CD4-positive, alpha-beta T cell (primary cell): ENCODE measurements at regions of chr6 and their contacts with region 1.

Region 1: GRCh38 chr6:63764318-63764916 is 128.8 kb downstream of the PHF3 start:
- DNase-seq: peak in 3 of 14 experiments; percentile 65 to 76 (median 70)
- ATAC-seq: no peak
- H3K4me3 ChIP-seq: no peak overlapping the region
- H3K4me3 Mint-ChIP-seq: no peak overlapping the region
- H3K27ac ChIP-seq: no peak overlapping the region
- H3K27ac Mint-ChIP-seq: no peak overlapping the region
- H3K4me1 ChIP-seq: no peaks in the 10 kb centered on the region
- H3K4me1 Mint-ChIP-seq: no peaks in the 10 kb centered on the region
- H3K27me3 ChIP-seq: no peaks in the 10 kb centered on the region
- H3K27me3 Mint-ChIP-seq: peaks cover 8% of the 10 kb centered on the region
- CTCF ChIP-seq: peak; percentile 77

Region 2: DNA sequence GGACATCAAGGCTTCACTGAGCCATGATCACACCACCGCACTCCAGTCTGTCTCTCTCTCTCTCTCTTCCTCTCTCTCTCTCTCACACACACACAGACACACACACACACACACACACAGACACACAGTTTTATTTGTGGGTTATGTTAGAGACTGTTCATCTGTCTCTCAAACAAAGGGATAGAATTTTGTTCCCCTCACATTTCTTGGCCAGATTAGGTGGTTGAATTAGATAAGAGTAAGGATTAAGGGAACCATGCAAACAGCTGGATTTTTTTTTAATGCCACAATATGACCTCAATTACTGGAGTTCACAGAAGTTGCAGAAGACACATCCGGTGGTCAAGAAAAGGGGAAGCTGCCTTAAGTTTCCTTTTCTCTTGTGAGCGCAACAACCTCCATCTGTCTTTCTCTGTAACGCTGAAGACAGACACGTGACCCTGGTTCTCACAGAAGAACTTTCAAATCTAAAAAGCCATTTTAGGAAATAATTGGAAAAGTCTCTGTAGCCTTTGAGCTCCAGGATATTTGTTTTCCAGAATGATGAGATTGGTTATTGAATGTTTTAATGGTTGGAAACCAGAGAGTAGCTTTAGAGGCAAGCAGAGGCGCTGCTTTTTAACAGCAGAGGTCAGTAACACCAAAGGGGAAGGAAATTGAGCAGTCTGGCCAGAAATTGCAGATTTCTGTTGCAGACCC is 411.7 kb before region 1 on chr6:
- CTCF ChIA-PET with region 1: no interaction called
- POLR2A ChIA-PET with region 1: no interaction called
- intact Hi-C with region 1: loop called (anchors 2 to 5 kb)
- DNase-seq: peak in 3 of 14 experiments; percentile 20 to 64 (median 58)
- ATAC-seq: no peak
- H3K4me3 ChIP-seq: no peak overlapping the region
- H3K4me3 Mint-ChIP-seq: no peak overlapping the region
- H3K27ac ChIP-seq: no peak overlapping the region
- H3K27ac Mint-ChIP-seq: no peak overlapping the region
- H3K4me1 ChIP-seq: peaks cover 4% of the 10 kb centered on the region
- H3K4me1 Mint-ChIP-seq: peaks cover 9% of the 10 kb centered on the region
- H3K27me3 ChIP-seq: no peaks in the 10 kb centered on the region
- H3K27me3 Mint-ChIP-seq: peaks cover 12% of the 10 kb centered on the region
- CTCF ChIP-seq: no peak

Region 3: GRCh38 chr6:63504777-63505384 is 259.5 kb before region 1 on chr6:
- CTCF ChIA-PET with region 1: no interaction called
- POLR2A ChIA-PET with region 1: no interaction called
- intact Hi-C with region 1: loop called in 1 of 2 experiments (anchors 10 kb)
- DNase-seq: no peak
- ATAC-seq: no peak
- H3K4me3 ChIP-seq: no peak overlapping the region
- H3K4me3 Mint-ChIP-seq: no peak overlapping the region
- H3K27ac ChIP-seq: no peak overlapping the region
- H3K27ac Mint-ChIP-seq: no peak overlapping the region
- H3K4me1 ChIP-seq: no peaks in the 10 kb centered on the region
- H3K4me1 Mint-ChIP-seq: no peaks in the 10 kb centered on the region
- H3K27me3 ChIP-seq: no peaks in the 10 kb centered on the region
- H3K27me3 Mint-ChIP-seq: peaks cover 10% of the 10 kb centered on the region
- CTCF ChIP-seq: no peak

Region 4: GRCh38 chr6:63859528-63859927 is 95.1 kb after region 1 on chr6:
- CTCF ChIA-PET with region 1: no interaction called
- POLR2A ChIA-PET with region 1: no interaction called
- intact Hi-C with region 1: no loop called
- DNase-seq: no peak
- ATAC-seq: no peak
- H3K4me3 ChIP-seq: no peak overlapping the region
- H3K4me3 Mint-ChIP-seq: no peak overlapping the region
- H3K27ac ChIP-seq: no peak overlapping the region
- H3K27ac Mint-ChIP-seq: no peak overlapping the region
- H3K4me1 ChIP-seq: no peaks in the 10 kb centered on the region
- H3K4me1 Mint-ChIP-seq: no peaks in the 10 kb centered on the region
- H3K27me3 ChIP-seq: no peaks in the 10 kb centered on the region
- H3K27me3 Mint-ChIP-seq: no peaks in the 10 kb centered on the region
- CTCF ChIP-seq: no peak